ENCODE measurements at regions of chr22 and their contacts with region 1.

Region 1: DNA sequence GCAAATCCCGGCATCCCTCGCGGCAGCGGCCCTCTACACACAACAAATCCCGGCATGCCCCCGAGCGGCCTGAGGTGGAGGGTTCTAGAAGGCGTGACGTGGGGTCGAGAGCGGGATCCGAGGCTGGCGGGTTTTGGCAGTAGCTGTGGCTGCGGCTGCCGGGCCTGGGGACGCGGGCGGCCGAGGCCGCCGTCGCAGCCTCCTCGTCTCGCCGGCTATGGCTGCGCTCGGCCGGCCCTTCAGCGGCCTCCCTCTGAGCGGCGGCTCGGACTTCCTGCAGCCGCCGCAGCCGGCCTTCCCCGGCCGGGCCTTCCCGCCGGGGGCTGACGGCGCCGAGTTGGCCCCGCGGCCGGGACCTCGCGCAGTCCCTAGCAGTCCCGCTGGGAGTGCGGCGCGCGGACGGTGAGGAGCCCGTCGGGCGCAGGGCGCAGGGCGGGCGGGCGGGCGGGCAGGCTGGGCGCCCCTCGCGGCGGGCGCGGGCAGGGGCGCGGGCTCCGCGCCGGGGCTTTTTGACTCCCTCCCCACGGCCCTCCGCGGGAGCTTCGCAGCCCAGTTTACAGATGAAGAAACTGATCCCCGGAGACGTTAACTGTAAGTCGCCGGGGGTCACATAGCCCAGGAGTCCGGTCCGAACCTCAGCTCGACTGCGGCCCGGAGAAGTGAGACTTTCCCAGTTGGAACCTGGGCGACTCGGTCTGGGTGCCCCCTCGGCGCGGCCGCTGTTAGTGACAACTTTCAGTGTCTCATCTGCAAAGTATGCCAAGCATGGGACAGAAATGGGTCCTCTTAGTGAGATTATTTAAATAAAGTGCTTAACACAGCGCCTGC is at the start of gene CCDC117:
- DNase-seq: peak; percentile 97
- ATAC-seq: peak; percentile 94
- H3K4me3 Mint-ChIP-seq: peak within 1 kb of the TSS; percentile 91
- H3K27ac Mint-ChIP-seq: peak within 1 kb of the TSS; percentile 97
- H3K4me1 Mint-ChIP-seq: peaks cover 28% of the 10 kb centered on the region
- H3K27me3 Mint-ChIP-seq: peaks cover 7% of the 10 kb centered on the region
- total RNA-seq, gene CCDC117: 35.5 to 42.4 TPM

Region 2: GRCh38 chr22:28741758-28742561 is 30.9 kb before region 1 on chr22 and contains the starts of genes CHEK2 and HSCB:
- CTCF ChIA-PET with region 1: interaction called, 10 read pairs
- DNase-seq: peak; percentile 100
- ATAC-seq: peak; percentile 92
- H3K4me3 Mint-ChIP-seq: peak within 1 kb of the TSS; percentile 85
- H3K27ac Mint-ChIP-seq: peak within 1 kb of the TSS; percentile 90
- H3K4me1 Mint-ChIP-seq: peaks cover 50% of the 10 kb centered on the region
- H3K27me3 Mint-ChIP-seq: no peaks in the 10 kb centered on the region
- total RNA-seq, gene CHEK2: 31.6 to 49.0 TPM
- total RNA-seq, gene HSCB: 17.6 to 19.2 TPM

Region 3: GRCh38 chr22:28750471-28750881 is 22.4 kb before region 1 on chr22:
- CTCF ChIA-PET with region 1: interaction called, 16 read pairs
- DNase-seq: no peak
- ATAC-seq: no peak
- H3K4me3 Mint-ChIP-seq: no peak overlapping the region
- H3K27ac Mint-ChIP-seq: no peak overlapping the region
- H3K4me1 Mint-ChIP-seq: peaks cover 34% of the 10 kb centered on the region
- H3K27me3 Mint-ChIP-seq: no peaks in the 10 kb centered on the region

Region 4: GRCh38 chr22:28783786-28784671 is 11.2 kb after region 1 on chr22:
- CTCF ChIA-PET with region 1: interaction called, 14 read pairs
- DNase-seq: no peak
- ATAC-seq: no peak
- H3K4me3 Mint-ChIP-seq: no peak overlapping the region
- H3K27ac Mint-ChIP-seq: no peak overlapping the region
- H3K4me1 Mint-ChIP-seq: peaks cover 11% of the 10 kb centered on the region
- H3K27me3 Mint-ChIP-seq: no peaks in the 10 kb centered on the region

Region 5: DNA sequence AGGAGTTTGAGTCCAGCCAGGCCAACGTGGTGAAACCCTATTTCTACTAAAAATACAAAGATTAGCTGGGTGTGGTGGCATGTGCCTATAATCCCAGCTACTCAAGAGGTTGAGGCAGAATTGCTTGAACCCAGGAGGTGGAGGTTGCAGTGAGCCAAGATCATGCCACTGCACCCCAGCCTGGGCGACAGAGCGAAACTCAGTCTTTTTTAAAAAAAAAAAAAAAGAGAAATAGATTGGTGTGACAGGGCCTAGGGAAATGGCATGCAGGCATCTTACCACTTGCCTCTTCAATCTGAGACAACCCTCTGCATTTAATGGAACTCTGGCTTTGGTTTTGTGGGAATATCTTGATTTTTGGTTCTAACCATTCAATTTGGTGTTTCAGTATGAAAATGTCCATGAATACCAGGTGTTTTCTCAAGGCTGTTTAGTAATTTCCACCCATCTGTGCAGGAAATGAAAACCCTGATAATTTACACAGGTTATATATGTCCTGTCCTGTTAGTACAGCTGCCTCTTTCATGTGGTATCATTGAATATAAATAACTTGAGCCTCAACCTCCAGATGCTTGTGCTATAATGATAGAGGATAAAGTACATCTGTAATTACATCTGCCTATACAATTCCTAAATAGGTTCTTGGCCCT is 19.1 kb after region 1 on chr22:
- CTCF ChIA-PET with region 1: interaction called, 14 read pairs
- DNase-seq: no peak
- ATAC-seq: peak; percentile 48
- H3K4me3 Mint-ChIP-seq: peak overlapping the region; percentile 10
- H3K27ac Mint-ChIP-seq: peak overlapping the region; percentile 81
- H3K4me1 Mint-ChIP-seq: peaks cover 60% of the 10 kb centered on the region
- H3K27me3 Mint-ChIP-seq: no peaks in the 10 kb centered on the region

Region 6: DNA sequence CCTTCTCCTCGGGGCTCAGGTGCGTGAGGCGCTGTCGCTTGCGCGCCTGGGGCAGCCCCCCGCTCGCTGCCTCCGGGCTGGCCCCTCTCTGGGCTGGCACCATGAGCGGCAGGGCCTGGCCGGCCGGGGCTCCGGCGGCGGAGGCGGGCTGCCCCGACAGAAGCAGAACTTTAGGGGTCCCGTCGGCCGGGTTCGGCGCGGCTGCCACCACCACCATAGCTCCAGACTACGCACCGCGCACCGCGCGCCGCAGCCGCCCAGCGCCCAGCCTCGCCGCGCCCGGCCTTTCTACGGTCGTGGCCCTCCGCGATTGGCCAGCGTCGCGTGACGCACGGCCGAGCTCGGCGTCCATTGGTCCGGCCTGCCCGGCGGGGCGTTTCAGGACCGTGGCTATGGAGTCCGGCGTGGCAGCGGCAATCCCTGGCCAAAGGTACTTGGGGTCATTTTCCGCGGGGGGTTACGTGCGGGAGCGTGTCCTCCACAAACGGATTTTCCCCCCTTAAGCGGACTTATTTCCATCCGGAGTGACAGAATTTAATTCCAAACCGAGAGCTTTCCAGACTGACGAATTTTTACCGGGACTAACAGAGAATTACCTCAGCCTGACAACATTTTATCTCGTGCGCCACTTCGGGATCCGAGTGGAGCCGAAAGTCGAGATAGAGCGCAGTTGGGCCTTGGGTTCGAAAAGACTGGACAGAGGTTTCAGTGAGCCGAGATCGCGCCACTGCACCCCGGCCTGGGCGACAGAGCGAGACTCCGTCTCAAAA is 27.6 kb after region 1 on chr22 and contains the start of gene XBP1:
- CTCF ChIA-PET with region 1: interaction called, 11 read pairs
- DNase-seq: peak; percentile 90
- ATAC-seq: peak; percentile 95
- H3K4me3 Mint-ChIP-seq: peak within 1 kb of the TSS; percentile 91
- H3K27ac Mint-ChIP-seq: peak within 1 kb of the TSS; percentile 92
- H3K4me1 Mint-ChIP-seq: peaks cover 45% of the 10 kb centered on the region
- H3K27me3 Mint-ChIP-seq: no peaks in the 10 kb centered on the region
- total RNA-seq, gene XBP1: 139 to 141 TPM

Region 7: GRCh38 chr22:28843633-28844032 is 70.8 kb after region 1 on chr22:
- CTCF ChIA-PET with region 1: no interaction called
- DNase-seq: no peak
- ATAC-seq: no peak
- H3K4me3 Mint-ChIP-seq: no peak overlapping the region
- H3K27ac Mint-ChIP-seq: no peak overlapping the region
- H3K4me1 Mint-ChIP-seq: no peaks in the 10 kb centered on the region
- H3K27me3 Mint-ChIP-seq: peaks cover 13% of the 10 kb centered on the region